CD8-positive, alpha-beta T cell (primary cell): ENCODE measurements at regions of chr1 and their contacts with region 1.

Region 1: GRCh38 chr1:183655562-183656075 is 2.5 kb upstream of the APOBEC4 start:
- DNase-seq: peak; percentile 37 to 83 (median 77)
- ATAC-seq: peak; percentile 84
- H3K4me3 ChIP-seq: no peak overlapping the region
- H3K4me3 Mint-ChIP-seq: no peak overlapping the region
- H3K27ac ChIP-seq: no peak overlapping the region
- H3K27ac Mint-ChIP-seq: no peak overlapping the region
- H3K4me1 ChIP-seq: peaks cover 19% of the 10 kb centered on the region
- H3K4me1 Mint-ChIP-seq: peaks cover 29% of the 10 kb centered on the region
- H3K27me3 ChIP-seq: no peaks in the 10 kb centered on the region
- H3K27me3 Mint-ChIP-seq: no peaks in the 10 kb centered on the region
- CTCF ChIP-seq: peak; percentile 85

Region 2: GRCh38 chr1:183331091-183331742 is 324.4 kb before region 1 on chr1:
- CTCF ChIA-PET with region 1: no interaction called
- POLR2A ChIA-PET with region 1: no interaction called
- intact Hi-C with region 1: no loop called
- DNase-seq: no peak
- ATAC-seq: no peak
- H3K4me3 ChIP-seq: no peak overlapping the region
- H3K4me3 Mint-ChIP-seq: no peak overlapping the region
- H3K27ac ChIP-seq: no peak overlapping the region
- H3K27ac Mint-ChIP-seq: no peak overlapping the region
- H3K4me1 ChIP-seq: no peaks in the 10 kb centered on the region
- H3K4me1 Mint-ChIP-seq: no peaks in the 10 kb centered on the region
- H3K27me3 ChIP-seq: peaks cover 0 to 3% of the 10 kb centered on the region in 2 experiments
- H3K27me3 Mint-ChIP-seq: peaks cover 28% of the 10 kb centered on the region
- CTCF ChIP-seq: no peak

Region 3: GRCh38 chr1:183670178-183670577 is 14.6 kb after region 1 on chr1:
- CTCF ChIA-PET with region 1: interaction called, 10 read pairs
- POLR2A ChIA-PET with region 1: no interaction called
- intact Hi-C with region 1: no loop called
- DNase-seq: no peak
- ATAC-seq: no peak
- H3K4me3 ChIP-seq: no peak overlapping the region
- H3K4me3 Mint-ChIP-seq: no peak overlapping the region
- H3K27ac ChIP-seq: no peak overlapping the region
- H3K27ac Mint-ChIP-seq: no peak overlapping the region
- H3K4me1 ChIP-seq: no peaks in the 10 kb centered on the region
- H3K4me1 Mint-ChIP-seq: no peaks in the 10 kb centered on the region
- H3K27me3 ChIP-seq: no peaks in the 10 kb centered on the region
- H3K27me3 Mint-ChIP-seq: peaks cover 9% of the 10 kb centered on the region
- CTCF ChIP-seq: no peak

Region 4: GRCh38 chr1:183685112-183685713 is 29.6 kb after region 1 on chr1:
- CTCF ChIA-PET with region 1: interaction called, 46 read pairs
- POLR2A ChIA-PET with region 1: no interaction called
- intact Hi-C with region 1: loop called (anchors 1 to 5 kb)
- DNase-seq: peak in 3 of 9 experiments; percentile 18 to 69 (median 58)
- ATAC-seq: peak; percentile 83
- H3K4me3 ChIP-seq: no peak overlapping the region
- H3K4me3 Mint-ChIP-seq: no peak overlapping the region
- H3K27ac ChIP-seq: no peak overlapping the region
- H3K27ac Mint-ChIP-seq: no peak overlapping the region
- H3K4me1 ChIP-seq: no peaks in the 10 kb centered on the region
- H3K4me1 Mint-ChIP-seq: peaks cover 4% of the 10 kb centered on the region
- H3K27me3 ChIP-seq: no peaks in the 10 kb centered on the region
- H3K27me3 Mint-ChIP-seq: peaks cover 5% of the 10 kb centered on the region
- CTCF ChIP-seq: peak; percentile 83

Region 5: DNA sequence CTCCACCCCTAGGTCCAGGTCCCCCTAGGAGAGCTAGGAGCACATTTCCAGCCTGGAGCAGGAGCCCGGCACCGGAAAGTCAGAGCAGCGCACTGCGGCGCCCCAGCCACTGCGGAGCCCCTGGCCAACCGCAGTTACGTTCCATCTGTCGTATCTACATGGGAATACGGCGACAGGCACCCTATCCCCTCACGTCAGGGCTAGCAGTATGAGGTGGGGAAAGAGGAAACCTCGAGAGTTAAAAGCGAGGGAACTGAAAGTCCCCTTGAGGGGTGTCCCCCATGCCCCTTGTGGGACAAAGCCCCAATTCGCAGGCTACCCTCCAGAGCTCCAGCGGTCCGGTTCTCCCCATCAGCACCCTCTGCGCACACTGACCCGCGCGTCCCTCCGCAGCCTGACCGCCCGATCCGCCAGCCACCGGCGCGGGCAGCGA is 380.9 kb after region 1 on chr1:
- CTCF ChIA-PET with region 1: no interaction called
- POLR2A ChIA-PET with region 1: no interaction called
- intact Hi-C with region 1: loop called in 1 of 2 experiments (anchors 5 kb)
- DNase-seq: peak in 5 of 9 experiments; percentile 12 to 56 (median 44)
- ATAC-seq: peak; percentile 38
- H3K4me3 ChIP-seq: peak overlapping the region; percentile 45 to 57
- H3K4me3 Mint-ChIP-seq: peak overlapping the region; percentile 71
- H3K27ac ChIP-seq: no peak overlapping the region
- H3K27ac Mint-ChIP-seq: no peak overlapping the region
- H3K4me1 ChIP-seq: peaks cover 7% of the 10 kb centered on the region
- H3K4me1 Mint-ChIP-seq: peaks cover 15% of the 10 kb centered on the region
- H3K27me3 ChIP-seq: peaks cover 0 to 3% of the 10 kb centered on the region in 2 experiments
- H3K27me3 Mint-ChIP-seq: peaks cover 46% of the 10 kb centered on the region
- CTCF ChIP-seq: no peak

Region 6: GRCh38 chr1:184691719-184692324 is 1036.2 kb after region 1 on chr1:
- CTCF ChIA-PET with region 1: no interaction called
- POLR2A ChIA-PET with region 1: no interaction called
- intact Hi-C with region 1: loop called in 1 of 2 experiments (anchors 10 kb)
- DNase-seq: peak in 2 of 9 experiments; percentile 12 to 19
- ATAC-seq: no peak
- H3K4me3 ChIP-seq: no peak overlapping the region
- H3K4me3 Mint-ChIP-seq: no peak overlapping the region
- H3K27ac ChIP-seq: no peak overlapping the region
- H3K27ac Mint-ChIP-seq: peak overlapping the region; percentile 20
- H3K4me1 ChIP-seq: no peaks in the 10 kb centered on the region
- H3K4me1 Mint-ChIP-seq: no peaks in the 10 kb centered on the region
- H3K27me3 ChIP-seq: no peaks in the 10 kb centered on the region
- H3K27me3 Mint-ChIP-seq: no peaks in the 10 kb centered on the region
- CTCF ChIP-seq: peak; percentile 20